ENCODE measurements at regions of chr1 and their contacts with region 1.

Region 1: DNA sequence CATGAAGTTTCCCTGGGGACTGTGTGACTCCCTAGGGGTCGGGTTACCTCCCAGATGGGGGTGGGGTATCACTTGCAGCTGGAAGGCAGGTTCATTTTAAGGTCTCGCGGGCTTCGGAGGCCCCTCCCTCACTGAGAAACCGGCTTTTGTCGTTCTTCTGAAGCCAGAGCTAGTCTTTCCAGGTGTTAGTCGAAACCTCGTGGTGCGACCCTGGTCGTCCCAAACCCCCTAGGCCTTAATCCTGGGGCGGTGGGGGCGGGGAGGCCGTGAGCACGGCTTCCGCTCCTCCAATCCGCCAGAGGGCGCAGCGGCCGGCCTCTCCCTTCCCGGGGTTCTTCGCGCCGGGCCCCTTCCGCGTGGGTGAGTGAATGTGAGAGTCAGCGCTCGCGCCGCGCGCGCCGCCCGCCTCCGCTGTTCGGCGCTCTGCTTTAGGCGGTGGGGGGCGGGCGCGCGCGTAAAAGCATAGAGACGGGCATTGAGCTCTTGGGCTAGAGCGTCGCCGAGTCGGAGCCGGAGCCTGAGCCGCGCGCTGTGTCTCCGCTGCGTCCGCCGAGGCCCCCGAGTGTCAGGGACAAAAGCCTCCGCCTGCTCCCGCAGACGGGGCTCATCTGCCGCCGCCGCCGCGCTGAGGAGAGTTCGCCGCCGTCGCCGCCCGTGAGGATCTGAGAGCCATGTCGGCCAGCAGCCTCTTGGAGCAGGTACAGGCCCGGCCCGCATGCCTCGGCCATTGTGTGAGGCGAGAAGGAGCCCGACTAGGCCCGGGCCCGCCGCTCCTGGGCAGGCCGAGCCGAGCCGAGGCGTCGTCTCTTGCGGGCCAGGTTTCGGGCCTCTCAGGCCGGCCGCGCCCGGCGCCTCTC is at the start of gene YTHDF2:
- DNase-seq: peak; percentile 97
- H3K4me3 ChIP-seq: peak within 1 kb of the TSS; percentile 55 to 59
- H3K4me3 Mint-ChIP-seq: peak within 1 kb of the TSS; percentile 92 to 99 (median 96)
- H3K27ac ChIP-seq: peak within 1 kb of the TSS; percentile 90
- H3K27ac Mint-ChIP-seq: peak within 1 kb of the TSS; percentile 93 to 98 (median 97)
- H3K4me1 ChIP-seq: peaks cover 43% of the 10 kb centered on the region
- H3K4me1 Mint-ChIP-seq: peaks cover 18 to 51% (median 29%) of the 10 kb centered on the region in 4 donors
- H3K27me3 ChIP-seq: no peaks in the 10 kb centered on the region
- H3K27me3 Mint-ChIP-seq: peaks cover 0 to 2% of the 10 kb centered on the region in 2 donors
- total RNA-seq, gene YTHDF2: 65.1 to 76.8 TPM

Region 2: DNA sequence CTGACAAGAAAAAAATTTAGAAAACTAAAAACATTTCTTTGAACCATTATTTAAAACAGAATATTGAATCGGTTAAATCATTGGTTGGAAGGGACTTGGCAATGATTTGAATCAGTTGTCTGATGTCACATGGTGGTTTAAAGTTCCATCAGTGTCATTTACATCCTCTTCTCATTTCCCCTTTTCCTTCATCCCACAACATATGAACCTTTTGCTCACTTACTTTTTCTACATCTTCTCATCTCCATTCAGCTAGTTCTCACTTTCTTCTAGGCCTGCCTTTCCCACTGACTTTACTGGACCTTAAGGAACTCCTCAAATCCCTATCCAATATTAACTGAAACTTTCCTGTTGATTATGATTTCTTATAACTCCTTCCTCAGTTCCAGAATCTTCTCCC is 308.7 kb before region 1 on chr1:
- CTCF ChIA-PET with region 1: no interaction called
- POLR2A ChIA-PET with region 1: no interaction called
- intact Hi-C with region 1: no loop called
- DNase-seq: no peak
- H3K4me3 ChIP-seq: no peak overlapping the region
- H3K4me3 Mint-ChIP-seq: no peak overlapping the region
- H3K27ac ChIP-seq: no peak overlapping the region
- H3K27ac Mint-ChIP-seq: no peak overlapping the region
- H3K4me1 ChIP-seq: no peaks in the 10 kb centered on the region
- H3K4me1 Mint-ChIP-seq: peaks cover 0 to 2% (median under 1%) of the 10 kb centered on the region in 4 donors
- H3K27me3 ChIP-seq: no peaks in the 10 kb centered on the region
- H3K27me3 Mint-ChIP-seq: no peaks in the 10 kb centered on the region

Region 3: GRCh38 chr1:28449904-28450303 is 286.8 kb before region 1 on chr1:
- CTCF ChIA-PET with region 1: no interaction called
- POLR2A ChIA-PET with region 1: no interaction called
- intact Hi-C with region 1: no loop called
- DNase-seq: peak; percentile 8 to 55 (median 15)
- H3K4me3 ChIP-seq: no peak overlapping the region
- H3K4me3 Mint-ChIP-seq: peak overlapping the region in 2 of 8 donors; percentile 42 to 55
- H3K27ac ChIP-seq: peak overlapping the region; percentile 0
- H3K27ac Mint-ChIP-seq: peak overlapping the region in 6 of 7 donors; percentile 1 to 83 (median 36)
- H3K4me1 ChIP-seq: peaks cover 19% of the 10 kb centered on the region
- H3K4me1 Mint-ChIP-seq: peaks cover 13 to 21% (median 15%) of the 10 kb centered on the region in 4 donors
- H3K27me3 ChIP-seq: no peaks in the 10 kb centered on the region
- H3K27me3 Mint-ChIP-seq: no peaks in the 10 kb centered on the region

Region 4: GRCh38 chr1:28518000-28518744 is 218.5 kb before region 1 on chr1:
- CTCF ChIA-PET with region 1: interaction called, 3 read pairs
- POLR2A ChIA-PET with region 1: interaction called, 8 read pairs
- intact Hi-C with region 1: loop called (anchors 1 kb)
- DNase-seq: peak; percentile 84 to 87 (median 86)
- H3K4me3 ChIP-seq: peak overlapping the region; percentile 33 to 65
- H3K4me3 Mint-ChIP-seq: peak overlapping the region; percentile 85 to 92 (median 90)
- H3K27ac ChIP-seq: peak overlapping the region; percentile 56
- H3K27ac Mint-ChIP-seq: peak overlapping the region; percentile 67 to 94 (median 85)
- H3K4me1 ChIP-seq: peaks cover 27% of the 10 kb centered on the region
- H3K4me1 Mint-ChIP-seq: peaks cover 15 to 32% (median 21%) of the 10 kb centered on the region in 4 donors
- H3K27me3 ChIP-seq: no peaks in the 10 kb centered on the region
- H3K27me3 Mint-ChIP-seq: no peaks in the 10 kb centered on the region

Region 5: GRCh38 chr1:28642847-28643635 is 93.6 kb before region 1 on chr1 and contains the start of gene TAF12:
- CTCF ChIA-PET with region 1: interaction called, 83 read pairs
- POLR2A ChIA-PET with region 1: interaction called, 182 read pairs
- intact Hi-C with region 1: loop called (anchors 1 kb)
- DNase-seq: peak; percentile 88 to 92 (median 91)
- H3K4me3 ChIP-seq: peak within 1 kb of the TSS; percentile 89 to 99
- H3K4me3 Mint-ChIP-seq: peak within 1 kb of the TSS; percentile 96 to 100 (median 99)
- H3K27ac ChIP-seq: peak within 1 kb of the TSS; percentile 74
- H3K27ac Mint-ChIP-seq: peak within 1 kb of the TSS; percentile 97 to 100 (median 98)
- H3K4me1 ChIP-seq: peaks cover 48% of the 10 kb centered on the region
- H3K4me1 Mint-ChIP-seq: peaks cover 32 to 62% (median 46%) of the 10 kb centered on the region in 4 donors
- H3K27me3 ChIP-seq: no peaks in the 10 kb centered on the region
- H3K27me3 Mint-ChIP-seq: no peaks in the 10 kb centered on the region
- total RNA-seq, gene TAF12: 23.5 to 25.2 TPM

Region 6: GRCh38 chr1:28668191-28668955 is 68.3 kb before region 1 on chr1 and contains the start of gene GMEB1:
- CTCF ChIA-PET with region 1: interaction called, 29 read pairs
- POLR2A ChIA-PET with region 1: interaction called, 95 read pairs
- intact Hi-C with region 1: loop called (anchors 1 kb)
- DNase-seq: peak; percentile 79 to 86 (median 84)
- H3K4me3 ChIP-seq: peak within 1 kb of the TSS; percentile 89 to 92
- H3K4me3 Mint-ChIP-seq: peak within 1 kb of the TSS; percentile 92 to 97 (median 93)
- H3K27ac ChIP-seq: peak within 1 kb of the TSS; percentile 88
- H3K27ac Mint-ChIP-seq: peak within 1 kb of the TSS; percentile 98 to 100 (median 98)
- H3K4me1 ChIP-seq: peaks cover 21% of the 10 kb centered on the region
- H3K4me1 Mint-ChIP-seq: peaks cover 13 to 26% (median 18%) of the 10 kb centered on the region in 4 donors
- H3K27me3 ChIP-seq: no peaks in the 10 kb centered on the region
- H3K27me3 Mint-ChIP-seq: no peaks in the 10 kb centered on the region
- total RNA-seq, gene GMEB1: 21.8 to 21.9 TPM

Region 7: GRCh38 chr1:28751315-28752060 is 14.8 kb after region 1 on chr1:
- CTCF ChIA-PET with region 1: interaction called, 18 read pairs
- POLR2A ChIA-PET with region 1: interaction called, 15 read pairs
- intact Hi-C with region 1: no loop called
- DNase-seq: no peak
- H3K4me3 ChIP-seq: no peak overlapping the region
- H3K4me3 Mint-ChIP-seq: peak overlapping the region in 6 of 8 donors; percentile 6 to 50 (median 24)
- H3K27ac ChIP-seq: no peak overlapping the region
- H3K27ac Mint-ChIP-seq: peak overlapping the region in 5 of 7 donors; percentile 4 to 55 (median 48)
- H3K4me1 ChIP-seq: peaks cover 100% of the 10 kb centered on the region
- H3K4me1 Mint-ChIP-seq: peaks cover 34 to 69% (median 45%) of the 10 kb centered on the region in 4 donors
- H3K27me3 ChIP-seq: no peaks in the 10 kb centered on the region
- H3K27me3 Mint-ChIP-seq: no peaks in the 10 kb centered on the region

Region 8: DNA sequence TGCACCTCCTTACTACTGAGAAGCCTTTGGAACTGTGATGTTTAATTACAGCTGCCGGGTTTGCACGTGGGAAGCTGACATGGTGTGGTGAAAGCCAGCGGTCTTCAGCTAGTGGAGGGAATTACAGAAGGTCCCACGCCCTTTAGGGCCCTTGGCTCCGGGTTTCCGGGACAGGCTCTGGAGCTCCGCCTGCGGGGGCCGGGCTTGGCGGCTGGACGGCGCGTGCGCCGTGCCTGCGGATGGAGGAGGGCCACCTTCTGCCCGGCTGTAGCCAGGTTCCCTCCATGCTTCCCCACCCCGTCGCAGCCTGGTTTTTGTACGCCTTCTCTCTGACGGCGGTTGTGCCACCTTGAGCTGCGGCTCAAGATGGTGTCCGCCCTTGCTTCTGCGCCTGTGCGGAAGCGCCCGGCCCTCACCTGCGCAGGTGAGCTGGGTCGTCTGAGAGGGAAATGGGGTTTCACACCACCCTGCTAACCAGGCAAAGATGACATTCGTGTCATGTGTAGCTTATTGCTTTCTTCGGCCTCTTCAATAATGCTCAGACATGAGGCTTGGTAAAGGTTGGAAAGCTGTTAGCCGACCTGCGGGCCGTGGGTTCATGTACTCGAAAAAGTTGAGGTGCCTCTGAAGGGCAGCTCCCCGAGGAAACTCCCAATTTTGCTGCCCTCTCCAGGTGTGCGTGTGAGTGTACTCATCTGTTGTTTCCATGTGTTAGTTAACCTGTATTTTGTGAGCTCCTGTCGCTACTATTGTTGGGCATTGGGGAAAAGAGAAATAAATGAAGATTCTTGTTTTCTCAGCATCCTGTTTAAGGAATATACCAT is 38.7 kb after region 1 on chr1:
- CTCF ChIA-PET with region 1: interaction called, 18 read pairs
- POLR2A ChIA-PET with region 1: interaction called, 22 read pairs
- intact Hi-C with region 1: no loop called
- DNase-seq: peak; percentile 66 to 81 (median 74)
- H3K4me3 ChIP-seq: peak overlapping the region; percentile 8 to 64
- H3K4me3 Mint-ChIP-seq: peak overlapping the region; percentile 81 to 91 (median 85)
- H3K27ac ChIP-seq: peak overlapping the region; percentile 28
- H3K27ac Mint-ChIP-seq: peak overlapping the region; percentile 70 to 93 (median 87)
- H3K4me1 ChIP-seq: peaks cover 6% of the 10 kb centered on the region
- H3K4me1 Mint-ChIP-seq: peaks cover 5 to 13% (median 9%) of the 10 kb centered on the region in 4 donors
- H3K27me3 ChIP-seq: no peaks in the 10 kb centered on the region
- H3K27me3 Mint-ChIP-seq: no peaks in the 10 kb centered on the region

Region 9: GRCh38 chr1:28845786-28846543 is 109.3 kb after region 1 on chr1:
- CTCF ChIA-PET with region 1: no interaction called
- POLR2A ChIA-PET with region 1: no interaction called
- intact Hi-C with region 1: no loop called
- DNase-seq: no peak
- H3K4me3 ChIP-seq: no peak overlapping the region
- H3K4me3 Mint-ChIP-seq: peak overlapping the region in 1 of 8 donors; percentile 37
- H3K27ac ChIP-seq: no peak overlapping the region
- H3K27ac Mint-ChIP-seq: peak overlapping the region in 2 of 7 donors; percentile 46 to 81
- H3K4me1 ChIP-seq: no peaks in the 10 kb centered on the region
- H3K4me1 Mint-ChIP-seq: peaks cover 3 to 7% (median 7%) of the 10 kb centered on the region in 4 donors
- H3K27me3 ChIP-seq: no peaks in the 10 kb centered on the region
- H3K27me3 Mint-ChIP-seq: peaks cover 1 to 8% of the 10 kb centered on the region in 2 donors